ENCODE measurements at regions of chr11 and their contacts with region 1.

Region 1: GRCh38 chr11:61477727-61478148 is 30.8 kb upstream of the LRRC10B start:
- DNase-seq: peak; percentile 54
- H3K4me3 ChIP-seq: no peak overlapping the region
- H3K27ac ChIP-seq: no peak overlapping the region
- H3K4me1 ChIP-seq: no peaks in the 10 kb centered on the region
- H3K27me3 ChIP-seq: no peaks in the 10 kb centered on the region
- CTCF ChIP-seq: peak; percentile 95

Region 2: DNA sequence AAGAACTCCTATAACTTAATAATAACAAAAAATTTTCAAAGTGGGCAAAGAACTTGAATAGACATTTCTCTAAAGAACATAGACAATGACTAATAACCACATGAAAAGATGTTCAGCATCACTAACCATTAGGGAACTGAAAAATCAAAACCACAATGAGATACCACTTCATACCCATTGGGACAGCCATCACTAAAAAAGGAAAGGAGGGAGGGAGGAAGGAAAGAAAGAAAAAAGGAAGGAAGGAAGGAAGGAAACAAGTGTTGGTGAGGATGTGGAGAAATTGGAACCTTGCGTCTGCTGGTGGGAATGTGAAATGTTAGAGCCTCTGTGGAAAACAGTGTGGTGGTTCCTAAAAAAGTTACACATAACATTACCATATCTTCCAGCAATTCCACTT is 906.8 kb before region 1 on chr11:
- intact Hi-C with region 1: no loop called
- DNase-seq: no peak
- H3K4me3 ChIP-seq: no peak overlapping the region
- H3K27ac ChIP-seq: no peak overlapping the region
- H3K4me1 ChIP-seq: no peaks in the 10 kb centered on the region
- H3K27me3 ChIP-seq: no peaks in the 10 kb centered on the region
- CTCF ChIP-seq: no peak

Region 3: GRCh38 chr11:61516675-61517572 is 39.2 kb after region 1 on chr11:
- intact Hi-C with region 1: loop called (anchors 2 kb)
- DNase-seq: peak; percentile 43
- H3K4me3 ChIP-seq: no peak overlapping the region
- H3K27ac ChIP-seq: no peak overlapping the region
- H3K4me1 ChIP-seq: no peaks in the 10 kb centered on the region
- H3K27me3 ChIP-seq: no peaks in the 10 kb centered on the region
- CTCF ChIP-seq: peak; percentile 99

Region 4: DNA sequence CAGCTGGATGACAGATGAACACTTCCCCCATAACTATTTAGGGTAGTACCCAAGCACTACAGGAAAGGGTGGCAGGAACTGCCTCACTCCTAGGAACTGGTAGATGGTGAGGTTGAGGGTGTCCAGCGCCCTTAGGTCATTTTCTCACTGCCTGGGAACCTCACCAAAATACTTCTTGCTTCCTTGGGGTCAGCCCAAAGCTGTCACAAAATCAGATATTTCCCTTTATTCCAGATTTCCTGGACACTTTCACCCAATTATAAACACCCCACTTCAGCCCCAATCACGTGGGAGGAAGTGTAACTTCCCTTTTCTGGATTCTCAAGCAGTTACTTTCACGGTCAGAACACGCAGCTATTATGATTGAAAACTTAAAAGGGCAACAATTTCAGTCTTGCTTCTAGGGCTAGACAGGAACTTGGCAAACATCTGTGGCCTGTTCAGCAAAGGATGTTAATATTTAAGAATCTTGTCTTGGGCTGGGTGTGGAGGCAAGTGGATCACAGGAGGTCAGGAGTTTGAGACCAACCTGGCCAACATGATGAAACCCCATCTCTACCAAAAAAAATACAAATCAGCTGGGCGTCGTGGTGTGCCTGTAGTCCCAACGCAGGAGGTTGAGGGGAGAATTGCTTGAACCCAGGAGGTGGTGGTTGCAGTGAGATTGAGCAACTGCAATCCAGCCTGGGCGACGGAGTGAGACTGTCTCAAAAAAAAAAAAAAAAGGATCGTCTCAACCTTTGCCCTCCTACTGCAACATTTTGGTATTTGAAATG is 485.7 kb after region 1 on chr11:
- intact Hi-C with region 1: no loop called
- DNase-seq: no peak
- H3K4me3 ChIP-seq: no peak overlapping the region
- H3K27ac ChIP-seq: peak overlapping the region; percentile 98
- H3K4me1 ChIP-seq: no peaks in the 10 kb centered on the region
- H3K27me3 ChIP-seq: no peaks in the 10 kb centered on the region
- CTCF ChIP-seq: no peak

Measured in colonic mucosa (tissue), 4 donors.